ENCODE measurements at regions of chr1 and their contacts with region 1.

Region 1: DNA sequence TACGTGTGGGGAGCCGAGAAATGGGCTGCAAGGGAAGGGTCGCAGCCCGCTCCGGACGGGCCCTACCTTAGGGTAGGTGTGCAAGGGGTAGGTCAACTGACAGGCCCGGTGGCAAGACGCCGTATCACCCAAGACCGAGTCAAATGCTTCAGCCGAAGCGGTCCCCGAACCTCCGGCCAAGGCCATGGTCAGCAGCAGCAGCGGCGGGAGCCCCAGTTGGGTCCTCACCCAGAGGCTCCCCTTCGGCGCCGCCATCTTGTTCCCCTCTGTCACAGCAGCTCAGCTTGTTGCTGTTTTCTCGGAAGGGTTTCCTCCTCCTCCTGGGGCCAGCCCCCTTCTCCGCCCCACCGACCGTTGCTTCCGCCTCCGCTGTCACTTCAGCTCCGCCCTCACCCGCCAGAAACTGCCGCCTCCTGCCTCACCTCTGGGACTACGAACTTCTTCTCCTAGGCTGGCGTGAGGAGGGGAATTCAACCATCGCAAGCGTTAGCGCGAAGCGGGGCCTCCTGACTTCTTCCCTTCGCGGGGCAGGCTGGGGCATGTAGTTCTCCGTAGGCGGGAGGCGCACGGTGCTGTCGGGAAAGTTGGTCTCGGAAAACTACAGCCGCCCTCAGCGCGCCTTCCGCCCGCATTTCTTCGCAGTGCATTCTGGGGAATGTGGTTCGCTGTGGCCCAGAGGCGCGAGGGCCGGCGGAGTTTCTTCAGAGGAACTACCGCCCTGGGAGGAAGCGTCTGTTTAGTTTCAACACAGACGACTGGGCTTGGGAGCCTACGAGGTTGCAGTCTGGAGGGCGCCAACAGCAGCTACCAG is at the starts of genes TCEANC2 and TMEM59:
- DNase-seq: peak; percentile 97 to 99
- H3K4me3 ChIP-seq: peak within 1 kb of the TSS; percentile 85
- H3K27ac ChIP-seq: peak within 1 kb of the TSS; percentile 35
- H3K4me1 ChIP-seq: peaks cover 27% of the 10 kb centered on the region
- H3K27me3 ChIP-seq: no peaks in the 10 kb centered on the region
- CTCF ChIP-seq: no peak
- total RNA-seq, gene TCEANC2: 8.8 and 11.5 TPM in 2 replicates
- total RNA-seq, gene TMEM59: 239 and 287 TPM in 2 replicates

Region 2: GRCh38 chr1:53326088-53326597 is 727.0 kb before region 1 on chr1:
- CTCF ChIA-PET with region 1: no interaction called
- POLR2A ChIA-PET with region 1: no interaction called
- intact Hi-C with region 1: loop called (anchors 5 kb)
- DNase-seq: peak; percentile 94 to 99
- H3K4me3 ChIP-seq: peak overlapping the region; percentile 75
- H3K27ac ChIP-seq: peak overlapping the region; percentile 94
- H3K4me1 ChIP-seq: peaks cover 25% of the 10 kb centered on the region
- H3K27me3 ChIP-seq: no peaks in the 10 kb centered on the region
- CTCF ChIP-seq: no peak

Region 3: DNA sequence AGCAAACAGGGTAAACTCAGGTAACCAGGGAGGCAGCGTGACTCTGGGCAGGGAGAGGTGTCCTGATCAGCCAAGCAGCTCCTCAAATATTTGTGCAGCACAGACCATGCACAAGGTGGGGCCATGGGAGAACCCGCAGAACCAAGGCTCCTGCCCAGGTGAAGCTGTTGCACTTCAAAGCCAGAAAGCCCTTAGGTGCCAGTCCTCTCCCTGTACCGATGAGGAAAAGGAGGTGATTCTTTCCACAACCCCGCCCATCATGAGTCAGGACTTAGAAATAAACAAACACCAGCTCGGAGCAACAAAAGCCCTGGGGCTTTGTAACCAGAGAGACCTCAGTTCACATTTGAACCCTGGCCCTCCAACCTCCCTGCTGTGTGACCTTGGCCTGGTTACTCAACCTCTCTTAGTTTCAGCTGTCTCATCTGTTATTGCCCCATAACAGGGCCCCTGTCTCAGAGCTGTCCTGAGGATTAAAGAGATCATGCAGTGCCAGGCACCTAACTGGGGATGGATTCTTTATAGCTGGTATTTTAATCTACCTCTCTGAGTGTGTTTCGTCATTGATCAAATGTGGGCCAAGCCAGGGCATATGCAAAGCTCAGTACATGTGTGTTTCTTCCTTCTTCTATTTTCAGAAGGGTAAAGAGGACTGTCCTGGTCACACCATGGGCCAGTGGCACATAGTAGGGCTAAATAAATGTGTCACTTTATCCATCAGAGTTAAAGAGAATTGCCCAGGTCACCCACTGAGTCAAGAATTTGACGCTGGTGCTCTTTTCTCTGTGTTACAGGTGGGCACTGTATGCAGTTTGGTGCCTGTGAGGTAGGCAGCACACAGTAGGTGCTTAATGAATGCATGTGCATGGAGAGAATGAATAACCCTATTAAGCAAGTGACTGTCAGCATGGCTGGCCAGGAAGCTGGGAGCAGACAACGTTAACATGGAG is 36.6 kb before region 1 on chr1:
- CTCF ChIA-PET with region 1: interaction called, 3 read pairs
- POLR2A ChIA-PET with region 1: no interaction called
- intact Hi-C with region 1: loop called (anchors 2 kb)
- DNase-seq: peak; percentile 91 to 98
- H3K4me3 ChIP-seq: no peak overlapping the region
- H3K27ac ChIP-seq: peak overlapping the region; percentile 75
- H3K4me1 ChIP-seq: peaks cover 38% of the 10 kb centered on the region
- H3K27me3 ChIP-seq: no peaks in the 10 kb centered on the region; the same call in 1 of the 2 replicates
- CTCF ChIP-seq: no peak

Region 4: GRCh38 chr1:54081306-54082270 is 28.4 kb after region 1 on chr1:
- CTCF ChIA-PET with region 1: no interaction called
- POLR2A ChIA-PET with region 1: no interaction called
- intact Hi-C with region 1: no loop called
- DNase-seq: peak; percentile 44 to 60
- H3K4me3 ChIP-seq: no peak overlapping the region
- H3K27ac ChIP-seq: no peak overlapping the region
- H3K4me1 ChIP-seq: no peaks in the 10 kb centered on the region
- H3K27me3 ChIP-seq: no peaks in the 10 kb centered on the region
- CTCF ChIP-seq: peak; percentile 82

Region 5: DNA sequence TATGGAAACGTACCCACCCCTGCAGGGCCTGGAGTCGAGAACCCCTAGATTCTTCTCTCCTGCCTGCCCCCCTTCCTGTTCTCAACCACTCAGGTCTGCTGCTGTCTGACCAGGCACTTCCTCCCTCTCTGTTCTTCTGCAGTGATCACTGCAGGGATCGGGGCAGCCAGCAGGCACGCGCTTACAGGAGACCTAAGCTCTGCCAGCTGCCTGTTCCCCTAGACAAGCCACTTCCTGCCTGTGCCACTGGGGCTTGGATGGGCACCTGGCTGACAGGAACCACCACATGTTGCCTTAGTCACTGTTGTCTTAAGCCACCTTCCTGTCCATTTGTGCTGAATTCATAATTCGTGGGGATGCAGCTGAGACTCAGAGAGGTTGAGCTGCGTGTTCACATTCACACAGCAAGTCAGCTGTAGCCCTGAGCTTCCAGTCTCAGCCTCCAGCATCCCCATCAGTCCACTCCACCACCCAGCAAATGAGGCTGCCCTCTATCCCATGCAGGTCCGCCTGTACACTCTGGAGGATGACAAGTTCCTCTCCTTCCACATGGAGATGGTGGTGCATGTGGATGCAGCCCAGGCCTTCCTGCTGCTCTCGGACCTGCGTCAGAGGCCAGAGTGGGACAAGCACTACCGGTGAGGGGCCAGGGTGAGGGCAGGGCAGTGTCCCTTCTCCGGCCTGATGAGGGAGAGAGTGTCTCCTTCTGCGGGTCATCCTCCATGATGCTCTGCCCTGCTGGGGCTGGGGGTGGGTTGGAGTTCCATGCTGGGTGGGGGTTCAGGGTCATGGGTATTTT is 551.6 kb after region 1 on chr1:
- CTCF ChIA-PET with region 1: no interaction called
- POLR2A ChIA-PET with region 1: no interaction called
- intact Hi-C with region 1: no loop called
- DNase-seq: no peak
- H3K4me3 ChIP-seq: no peak overlapping the region
- H3K27ac ChIP-seq: no peak overlapping the region
- H3K4me1 ChIP-seq: no peaks in the 10 kb centered on the region
- H3K27me3 ChIP-seq: no peaks in the 10 kb centered on the region
- CTCF ChIP-seq: no peak

Region 6: GRCh38 chr1:54715493-54716298 is 662.6 kb after region 1 on chr1 and contains the start of gene TTC4:
- CTCF ChIA-PET with region 1: no interaction called
- POLR2A ChIA-PET with region 1: no interaction called
- intact Hi-C with region 1: loop called (anchors 1 kb)
- DNase-seq: peak; percentile 66 to 86
- H3K4me3 ChIP-seq: peak within 1 kb of the TSS; percentile 82
- H3K27ac ChIP-seq: peak within 1 kb of the TSS; percentile 78
- H3K4me1 ChIP-seq: peaks cover 9% of the 10 kb centered on the region
- H3K27me3 ChIP-seq: peaks cover 5% of the 10 kb centered on the region
- CTCF ChIP-seq: no peak; the same call in 1 of the 2 replicates
- total RNA-seq, gene TTC4: 30.4 and 31.5 TPM in 2 replicates